Cardiac septum (tissue), 1 donor: ENCODE measurements at regions of chr5 and their contacts with region 1.

Region 1: GRCh38 chr5:68343421-68343826 is 127.9 kb downstream of the PIK3R1 start:
- DNase-seq: no peak

Region 2: GRCh38 chr5:68433923-68434879 is 90.8 kb after region 1 on chr5:
- intact Hi-C with region 1: loop called (anchors 5 kb)
- DNase-seq: peak; percentile 96

Region 3: GRCh38 chr5:68446487-68446894 is 103.1 kb after region 1 on chr5:
- intact Hi-C with region 1: loop called (anchors 5 kb)
- DNase-seq: no peak